Heart right ventricle (tissue), 16 donors: ENCODE measurements at regions of chr16 and their contacts with region 1.

Region 1: DNA sequence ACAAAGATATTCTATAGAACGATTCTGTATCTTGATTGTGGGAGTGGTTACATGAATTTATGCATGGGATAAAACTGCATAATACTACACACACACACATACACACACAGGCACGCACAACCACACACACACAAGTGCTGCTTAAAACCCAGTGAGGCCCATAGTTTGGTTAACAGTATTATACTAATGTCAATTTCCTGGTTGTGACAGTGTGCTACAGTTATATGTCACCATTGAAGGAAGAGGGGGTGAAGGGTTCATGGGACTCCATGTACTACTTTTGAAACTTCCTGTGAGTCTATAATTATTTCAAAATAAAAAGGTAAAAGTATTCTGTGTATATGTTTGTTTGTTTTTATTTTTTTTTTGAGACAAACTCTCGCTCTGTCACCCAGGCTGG is 8.1 kb downstream of the ZC3H7A start:
- DNase-seq: no peak
- ATAC-seq: no peak
- H3K4me3 ChIP-seq: no peak overlapping the region
- H3K27ac ChIP-seq: no peak overlapping the region
- H3K4me1 ChIP-seq: peaks cover 13 to 80% (median 43%) of the 10 kb centered on the region in 9 donors
- H3K27me3 ChIP-seq: no peaks in the 10 kb centered on the region
- CTCF ChIP-seq: no peak

Region 2: GRCh38 chr16:10039220-10040096 is 1749.5 kb before region 1 on chr16:
- intact Hi-C with region 1: no loop called
- DNase-seq: peak; percentile 17 to 18
- ATAC-seq: peak in 3 of 8 donors; percentile 66 to 87 (median 70)
- H3K4me3 ChIP-seq: peak overlapping the region in 9 of 10 donors; percentile 5 to 41 (median 18)
- H3K27ac ChIP-seq: no peak overlapping the region
- H3K4me1 ChIP-seq: peaks cover 0 to 8% (median 0%) of the 10 kb centered on the region in 9 donors
- H3K27me3 ChIP-seq: peaks cover 0 to 38% (median 20%) of the 10 kb centered on the region in 7 donors
- CTCF ChIP-seq: peak in 8 of 9 donors; percentile 6 to 54 (median 32)

Region 3: GRCh38 chr16:11748404-11749254 is 40.3 kb before region 1 on chr16:
- intact Hi-C with region 1: loop called in 3 of 10 experiments (anchors 5 to 10 kb)
- DNase-seq: no peak
- ATAC-seq: no peak
- H3K4me3 ChIP-seq: no peak overlapping the region
- H3K27ac ChIP-seq: no peak overlapping the region
- H3K4me1 ChIP-seq: peaks cover 0 to 9% (median under 1%) of the 10 kb centered on the region in 9 donors
- H3K27me3 ChIP-seq: no peaks in the 10 kb centered on the region
- CTCF ChIP-seq: no peak